PC-9 (cell line): ENCODE measurements at regions of chr3 and their contacts with region 1.

Region 1: DNA sequence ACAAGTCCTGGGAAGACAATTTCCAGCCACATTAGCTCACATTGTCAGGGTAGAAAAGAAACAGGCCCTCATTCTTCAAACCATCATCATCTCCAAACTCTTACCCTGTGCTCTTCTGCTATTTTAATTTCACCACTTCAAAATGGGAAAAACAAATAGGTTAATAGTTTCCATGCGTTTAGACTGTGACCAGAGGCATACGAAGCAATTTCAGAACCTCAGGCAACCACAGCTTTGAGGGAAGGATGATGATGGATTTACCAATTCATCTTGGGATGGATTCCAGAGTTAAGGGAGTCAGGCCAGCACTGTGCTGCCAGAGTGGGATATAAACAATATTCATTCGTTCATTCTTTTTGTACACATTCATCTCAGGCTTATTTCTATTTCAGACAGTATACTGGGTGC is 307.8 kb upstream of the TPRG1 start:
- DNase-seq: no peak
- H3K4me3 ChIP-seq: no peak overlapping the region
- H3K27ac ChIP-seq: no peak overlapping the region
- H3K4me1 ChIP-seq: no peaks in the 10 kb centered on the region
- H3K27me3 ChIP-seq: no peaks in the 10 kb centered on the region
- CTCF ChIP-seq: no peak

Region 2: GRCh38 chr3:188830893-188831292 is 33.1 kb before region 1 on chr3:
- CTCF ChIA-PET with region 1: no interaction called
- POLR2A ChIA-PET with region 1: interaction called, 11 read pairs
- intact Hi-C with region 1: no loop called
- DNase-seq: no peak
- H3K4me3 ChIP-seq: no peak overlapping the region
- H3K27ac ChIP-seq: no peak overlapping the region
- H3K4me1 ChIP-seq: no peaks in the 10 kb centered on the region
- H3K27me3 ChIP-seq: no peaks in the 10 kb centered on the region
- CTCF ChIP-seq: peak; percentile 48; the same call in 1 of the 2 replicates

Region 3: DNA sequence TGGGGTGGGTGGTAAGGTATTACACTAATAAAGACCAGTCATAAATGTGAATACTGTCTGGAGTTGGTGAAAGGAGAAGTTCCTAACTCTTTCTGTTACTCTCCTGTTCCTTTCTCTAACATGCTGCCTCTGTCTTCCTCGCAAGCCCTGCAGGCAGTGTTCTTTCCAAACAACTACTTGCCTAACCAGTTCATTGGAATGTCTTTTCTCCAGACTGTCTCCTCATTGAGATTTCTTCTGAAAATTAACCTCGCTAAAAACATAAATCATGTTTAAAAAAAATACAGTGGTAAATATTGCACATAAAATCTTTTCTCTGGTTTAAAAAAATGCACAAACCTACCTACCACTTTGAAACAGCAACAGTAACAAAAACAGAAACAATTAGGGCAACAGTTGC is 902.4 kb after region 1 on chr3:
- CTCF ChIA-PET with region 1: no interaction called
- POLR2A ChIA-PET with region 1: no interaction called
- intact Hi-C with region 1: no loop called
- DNase-seq: peak; percentile 63 to 93
- H3K4me3 ChIP-seq: peak overlapping the region; percentile 38
- H3K27ac ChIP-seq: peak overlapping the region; percentile 90
- H3K4me1 ChIP-seq: peaks cover 35% of the 10 kb centered on the region
- H3K27me3 ChIP-seq: no peaks in the 10 kb centered on the region
- CTCF ChIP-seq: no peak